OCI-LY7 (cell line): ENCODE measurements at regions of chr5 and their contacts with region 1.

Region 1: GRCh38 chr5:132386644-132387286 is 17.3 kb downstream of the SLC22A5 start:
- DNase-seq: peak; percentile 86
- H3K4me3 ChIP-seq: no peak overlapping the region
- H3K27ac ChIP-seq: no peak overlapping the region
- H3K4me1 ChIP-seq: peaks cover 19% of the 10 kb centered on the region
- CTCF ChIP-seq: peak; percentile 94

Region 2: GRCh38 chr5:132180134-132180745 is 206.5 kb before region 1 on chr5:
- CTCF ChIA-PET with region 1: no interaction called
- POLR2A ChIA-PET with region 1: no interaction called
- intact Hi-C with region 1: loop called (anchors 1 kb)
- DNase-seq: peak; percentile 75
- H3K4me3 ChIP-seq: no peak overlapping the region
- H3K27ac ChIP-seq: no peak overlapping the region
- H3K4me1 ChIP-seq: peaks cover 43% of the 10 kb centered on the region
- CTCF ChIP-seq: peak; percentile 95

Region 3: GRCh38 chr5:132500931-132501630 is 114.3 kb after region 1 on chr5:
- CTCF ChIA-PET with region 1: interaction called, 38 read pairs
- POLR2A ChIA-PET with region 1: interaction called, 6 read pairs
- intact Hi-C with region 1: loop called (anchors 1 kb)
- DNase-seq: peak; percentile 89
- H3K4me3 ChIP-seq: no peak overlapping the region
- H3K27ac ChIP-seq: no peak overlapping the region
- H3K4me1 ChIP-seq: peaks cover 37% of the 10 kb centered on the region
- CTCF ChIP-seq: peak; percentile 99

Region 4: DNA sequence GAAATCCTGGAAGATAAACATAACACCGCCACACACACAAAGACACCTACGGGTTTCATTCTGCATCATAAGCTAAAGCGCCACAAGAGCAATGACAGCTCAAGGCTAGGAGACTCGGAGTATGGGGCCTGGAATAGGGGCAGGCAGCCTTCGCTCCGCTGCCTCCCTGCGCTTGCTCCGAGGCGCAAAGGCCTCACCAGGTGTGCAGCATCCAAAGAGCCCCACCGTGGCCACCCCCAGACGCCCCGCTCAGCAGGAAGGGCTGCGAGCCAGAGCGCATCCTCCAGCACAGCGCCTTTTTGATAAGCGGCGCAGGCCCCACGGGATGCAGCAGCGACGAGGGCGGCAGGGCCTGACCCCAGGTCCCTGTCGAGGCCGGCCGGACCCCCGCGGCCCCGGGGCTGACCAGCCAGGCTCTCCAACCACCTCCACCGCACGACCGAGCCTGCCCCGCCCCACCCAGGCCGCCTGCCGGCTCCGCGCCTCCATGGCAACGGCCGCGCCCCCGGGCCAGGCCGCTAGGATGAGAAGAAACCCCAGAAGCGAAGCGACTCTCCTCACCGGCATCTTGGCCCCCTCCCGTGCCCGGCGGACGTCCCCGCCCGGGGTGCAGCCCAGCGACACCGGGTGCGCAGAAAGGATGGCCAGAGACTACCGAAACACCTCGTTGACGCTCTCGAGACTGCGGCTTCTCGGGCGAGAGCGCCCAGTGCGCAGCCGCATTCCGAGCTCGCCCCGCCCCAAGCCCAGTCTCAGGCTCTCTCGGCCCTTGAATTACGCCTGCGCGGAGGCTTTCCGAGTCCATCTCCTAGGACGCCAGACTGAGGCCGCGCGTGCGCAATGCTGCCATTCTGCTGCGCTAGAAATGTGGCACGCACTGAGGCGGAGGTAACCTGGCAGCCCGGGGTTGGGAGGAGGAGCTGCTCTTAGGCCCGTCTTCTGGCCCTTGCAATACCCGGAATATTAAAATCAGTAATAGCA is 350.4 kb after region 1 on chr5 and contains the start of gene KIF3A:
- CTCF ChIA-PET with region 1: interaction called, 3 read pairs
- POLR2A ChIA-PET with region 1: no interaction called
- intact Hi-C with region 1: loop called (anchors 10 kb)
- DNase-seq: peak; percentile 98
- H3K4me3 ChIP-seq: peak within 1 kb of the TSS; percentile 74
- H3K27ac ChIP-seq: no peak within 1 kb of the TSS
- H3K4me1 ChIP-seq: peaks cover 18% of the 10 kb centered on the region
- CTCF ChIP-seq: no peak
- total RNA-seq, gene KIF3A: 6.7 and 8.7 TPM in 2 replicates

Region 5: GRCh38 chr5:132866342-132867045 is 479.7 kb after region 1 on chr5 and contains the starts of genes GDF9 and UQCRQ:
- CTCF ChIA-PET with region 1: no interaction called
- POLR2A ChIA-PET with region 1: no interaction called
- intact Hi-C with region 1: loop called (anchors 5 kb)
- DNase-seq: peak; percentile 100
- H3K4me3 ChIP-seq: peak within 1 kb of the TSS; percentile 94
- H3K27ac ChIP-seq: peak within 1 kb of the TSS; percentile 32
- H3K4me1 ChIP-seq: peaks cover 17% of the 10 kb centered on the region
- CTCF ChIP-seq: peak; percentile 33; the same call in 1 of the 2 replicates
- total RNA-seq, gene GDF9: 0.44 and 0.66 TPM in 2 replicates
- total RNA-seq, gene UQCRQ: 140 and 158 TPM in 2 replicates